Activated B cell treated with CpG ODN at 0.5 μM for 24 hours (primary cell): ENCODE measurements at regions of chr17 and their contacts with region 1.

Region 1: DNA sequence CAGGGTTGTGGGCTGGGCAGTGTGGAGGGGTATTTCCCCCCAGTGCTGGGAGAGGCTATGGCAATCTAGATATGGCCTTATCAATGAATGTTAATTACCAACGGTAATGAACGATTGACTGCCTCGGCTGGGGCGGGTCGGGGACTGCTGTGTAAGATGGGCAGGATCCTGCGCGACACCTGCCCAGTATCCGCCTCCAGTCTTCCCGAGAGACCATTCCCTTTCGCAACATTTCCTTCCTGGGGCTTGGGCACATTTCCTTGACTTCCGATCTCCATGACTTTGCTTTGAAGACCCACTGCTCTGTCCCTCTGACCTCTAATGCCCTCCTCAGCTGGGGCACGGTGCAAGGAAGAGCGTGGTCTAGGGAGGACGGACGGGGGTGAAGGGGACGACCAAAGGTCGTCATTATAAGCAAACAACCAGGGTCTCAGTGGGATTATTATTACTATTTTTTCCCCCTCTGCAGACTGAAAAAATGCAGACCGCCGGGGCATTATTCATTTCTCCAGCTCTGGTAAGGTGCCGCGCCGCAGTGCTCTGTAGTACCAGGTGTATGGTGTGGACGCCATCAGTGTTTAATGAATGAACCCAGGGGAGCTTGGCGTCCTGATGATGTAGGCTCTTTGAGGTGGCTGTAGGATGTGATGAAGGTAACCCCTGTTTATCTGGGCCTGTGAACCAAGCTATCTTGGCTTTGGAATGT is 506 bp downstream of the ATP5MC1 start:
- DNase-seq: no peak
- ATAC-seq: no peak
- H3K4me3 Mint-ChIP-seq: peak overlapping the region; percentile 94
- H3K27ac Mint-ChIP-seq: peak overlapping the region; percentile 94
- H3K4me1 Mint-ChIP-seq: peaks cover 34% of the 10 kb centered on the region
- H3K27me3 Mint-ChIP-seq: no peaks in the 10 kb centered on the region
- CTCF ChIP-seq: no peak

Region 2: GRCh38 chr17:48101012-48101720 is 791.9 kb before region 1 on chr17 and contains the start of gene CBX1:
- CTCF ChIA-PET with region 1: no interaction called
- POLR2A ChIA-PET with region 1: no interaction called
- intact Hi-C with region 1: loop called (anchors 5 kb)
- DNase-seq: peak; percentile 92
- ATAC-seq: peak; percentile 92
- H3K4me3 Mint-ChIP-seq: peak within 1 kb of the TSS; percentile 94
- H3K27ac Mint-ChIP-seq: peak within 1 kb of the TSS; percentile 92
- H3K4me1 Mint-ChIP-seq: peaks cover 50% of the 10 kb centered on the region
- H3K27me3 Mint-ChIP-seq: no peaks in the 10 kb centered on the region
- CTCF ChIP-seq: no peak
- total RNA-seq, gene CBX1: 46.0 and 49.5 TPM in 2 replicates

Region 3: DNA sequence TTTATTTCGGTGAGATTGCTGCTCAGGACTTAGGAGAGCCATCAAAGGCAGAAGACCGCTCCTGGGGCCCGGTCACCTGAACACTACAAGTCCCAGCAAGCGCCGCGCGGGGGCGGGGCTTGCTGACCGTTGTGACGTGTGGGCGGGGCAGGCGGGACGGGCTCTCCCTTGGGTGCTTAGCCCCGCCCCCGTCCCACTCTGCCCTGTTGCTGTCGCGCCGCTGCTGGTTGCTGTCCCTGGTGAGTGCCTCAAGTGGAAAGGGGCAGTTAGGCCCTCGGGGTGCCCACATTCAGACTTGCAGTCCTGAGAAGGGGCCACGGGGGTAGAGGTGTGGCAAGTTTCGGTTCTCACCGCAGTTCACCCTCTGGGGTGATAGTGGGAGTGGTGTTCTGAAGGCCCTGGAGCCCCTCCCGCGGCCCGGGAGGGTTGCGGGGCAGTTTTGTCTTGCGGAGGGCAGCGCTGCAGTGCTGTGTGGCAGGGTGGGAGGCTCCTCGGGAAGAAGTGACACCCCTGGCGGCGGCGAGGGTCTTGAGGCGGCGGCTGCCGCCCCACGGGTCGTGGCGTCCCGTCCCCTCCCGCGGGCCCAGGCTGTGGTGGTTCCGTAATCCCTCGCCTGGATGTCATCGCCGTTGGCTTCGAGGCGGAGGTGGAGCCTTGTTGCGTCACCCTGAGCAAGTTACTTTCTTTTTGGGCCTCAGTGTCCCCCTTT is 62.1 kb before region 1 on chr17 and contains the start of gene CALCOCO2:
- CTCF ChIA-PET with region 1: no interaction called
- POLR2A ChIA-PET with region 1: no interaction called
- intact Hi-C with region 1: loop called (anchors 1 kb)
- DNase-seq: peak; percentile 82
- ATAC-seq: peak; percentile 96
- H3K4me3 Mint-ChIP-seq: peak within 1 kb of the TSS; percentile 99
- H3K27ac Mint-ChIP-seq: peak within 1 kb of the TSS; percentile 99
- H3K4me1 Mint-ChIP-seq: peaks cover 42% of the 10 kb centered on the region
- H3K27me3 Mint-ChIP-seq: no peaks in the 10 kb centered on the region
- CTCF ChIP-seq: no peak
- total RNA-seq, gene CALCOCO2: 115 TPM in 2 replicates

Region 4: DNA sequence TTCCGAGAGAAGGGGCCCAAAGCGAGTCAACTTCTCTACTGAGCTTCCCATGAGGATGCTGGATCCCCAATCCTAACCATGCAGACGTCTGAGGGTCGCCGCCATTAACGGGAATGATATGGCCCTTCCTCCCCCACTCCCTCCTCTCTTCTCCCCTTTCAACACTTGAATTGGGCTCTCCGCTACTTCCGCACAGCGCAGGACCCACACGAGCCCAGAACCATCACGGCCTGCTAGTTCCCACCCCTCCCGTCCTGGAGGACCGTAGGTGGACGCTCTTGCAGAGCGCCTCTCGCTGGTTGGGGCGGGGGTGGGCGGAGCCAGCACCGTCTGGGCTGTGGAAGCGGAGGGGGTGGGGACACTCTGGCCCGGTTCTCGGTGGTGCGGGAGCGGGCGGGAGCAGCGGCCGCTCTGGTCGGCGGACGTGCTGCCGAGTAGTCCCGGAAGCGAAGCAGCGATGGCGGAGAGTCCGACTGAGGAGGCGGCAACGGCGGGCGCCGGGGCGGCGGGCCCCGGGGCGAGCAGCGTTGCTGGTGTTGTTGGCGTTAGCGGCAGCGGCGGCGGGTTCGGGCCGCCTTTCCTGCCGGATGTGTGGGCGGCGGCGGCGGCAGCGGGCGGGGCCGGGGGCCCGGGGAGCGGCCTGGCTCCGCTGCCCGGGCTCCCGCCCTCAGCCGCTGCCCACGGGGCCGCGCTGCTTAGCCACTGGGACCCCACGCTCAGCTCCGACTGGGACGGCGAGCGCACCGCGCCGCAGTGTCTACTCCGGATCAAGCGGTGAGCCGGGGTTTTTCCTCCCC is 15.2 kb after region 1 on chr17 and contains the start of gene UBE2Z:
- CTCF ChIA-PET with region 1: interaction called, 3 read pairs
- POLR2A ChIA-PET with region 1: interaction called, 103 read pairs
- intact Hi-C with region 1: loop called (anchors 1 kb)
- DNase-seq: peak; percentile 83
- ATAC-seq: peak; percentile 84
- H3K4me3 Mint-ChIP-seq: peak within 1 kb of the TSS; percentile 96
- H3K27ac Mint-ChIP-seq: peak within 1 kb of the TSS; percentile 99
- H3K4me1 Mint-ChIP-seq: peaks cover 51% of the 10 kb centered on the region
- H3K27me3 Mint-ChIP-seq: no peaks in the 10 kb centered on the region
- CTCF ChIP-seq: no peak
- total RNA-seq, gene UBE2Z: 121 and 154 TPM in 2 replicates

Region 5: DNA sequence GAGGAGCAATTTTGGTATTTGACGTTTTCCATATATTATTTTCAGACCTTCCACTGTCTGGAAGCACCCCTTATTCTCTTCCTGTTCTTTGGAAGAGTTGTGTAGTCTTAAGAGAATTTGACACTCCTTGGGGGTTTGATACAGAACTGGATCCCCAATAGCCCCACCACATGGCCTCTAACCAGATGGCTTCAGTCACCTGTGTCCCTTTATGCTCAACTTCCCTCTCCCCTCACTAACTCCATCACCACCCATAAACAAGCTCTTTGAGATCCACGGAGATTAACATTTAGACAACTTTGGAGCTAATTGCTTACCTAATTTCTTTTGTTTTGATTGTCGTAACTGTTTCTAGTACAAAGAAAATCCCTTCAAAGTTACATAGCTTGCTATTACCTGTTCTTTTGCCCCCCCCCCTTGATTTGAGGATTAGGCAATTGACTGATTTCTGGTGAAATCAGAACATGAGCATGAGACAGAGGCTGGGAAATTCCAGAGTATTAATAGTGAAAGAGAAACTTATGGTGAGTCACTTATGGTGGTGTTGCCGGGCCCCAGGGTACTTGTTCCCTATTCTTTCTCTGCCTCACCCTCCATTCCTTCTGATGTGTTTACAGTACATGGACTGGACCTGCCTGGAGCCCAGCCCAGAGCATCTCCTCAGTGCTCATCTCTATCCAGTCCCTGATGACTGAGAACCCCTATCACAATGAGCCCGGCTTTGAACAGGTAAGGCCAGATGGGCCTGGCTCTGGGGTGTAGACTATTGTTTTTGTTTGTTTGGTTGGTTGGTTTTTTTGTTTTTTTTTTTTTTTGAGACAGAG is 22.6 kb after region 1 on chr17:
- CTCF ChIA-PET with region 1: interaction called, 11 read pairs
- POLR2A ChIA-PET with region 1: interaction called, 61 read pairs
- intact Hi-C with region 1: no loop called
- DNase-seq: peak; percentile 35
- ATAC-seq: peak; percentile 90
- H3K4me3 Mint-ChIP-seq: peak overlapping the region; percentile 60
- H3K27ac Mint-ChIP-seq: peak overlapping the region; percentile 92
- H3K4me1 Mint-ChIP-seq: peaks cover 54% of the 10 kb centered on the region
- H3K27me3 Mint-ChIP-seq: no peaks in the 10 kb centered on the region
- CTCF ChIP-seq: no peak

Region 6: DNA sequence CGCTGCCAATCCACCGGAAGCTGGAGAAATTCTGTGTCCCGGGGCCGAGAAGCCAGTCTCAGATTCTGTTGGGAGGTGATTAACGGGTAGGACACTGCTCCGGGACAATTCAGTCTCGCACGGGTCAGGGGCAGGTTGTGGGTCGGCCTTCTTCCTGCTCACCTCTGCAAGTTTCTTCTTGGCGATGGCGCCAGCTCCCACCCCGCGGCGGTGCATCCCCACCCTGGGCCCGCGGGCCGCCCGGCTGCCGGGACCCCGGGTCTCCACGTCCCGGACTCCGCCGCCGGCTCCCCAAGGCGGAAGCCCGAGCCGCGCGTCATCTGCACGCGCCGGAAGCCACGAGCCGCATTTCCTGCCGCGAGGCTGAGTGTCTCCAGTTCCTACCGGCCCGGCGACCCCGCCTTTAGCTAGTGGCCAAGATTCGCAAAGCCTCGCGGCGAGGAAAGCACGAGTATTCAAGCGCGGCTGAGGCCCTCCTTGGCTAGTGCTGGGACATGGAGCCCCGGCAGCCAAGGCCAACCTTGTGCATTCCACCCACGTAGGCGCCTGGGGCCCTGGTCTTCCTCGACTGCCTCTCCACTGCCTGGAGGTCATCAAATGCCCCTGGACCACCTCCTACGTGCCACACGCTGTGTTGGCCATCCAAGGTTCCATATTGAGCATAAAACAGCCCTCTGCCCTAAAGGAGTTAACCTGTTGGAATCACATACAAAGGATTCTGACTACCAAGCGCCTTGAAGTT is 51.6 kb after region 1 on chr17 and contains the start of gene SNF8:
- CTCF ChIA-PET with region 1: no interaction called
- POLR2A ChIA-PET with region 1: interaction called, 42 read pairs
- intact Hi-C with region 1: loop called (anchors 1 kb)
- DNase-seq: peak; percentile 96
- ATAC-seq: peak; percentile 94
- H3K4me3 Mint-ChIP-seq: peak within 1 kb of the TSS; percentile 96
- H3K27ac Mint-ChIP-seq: peak within 1 kb of the TSS; percentile 90
- H3K4me1 Mint-ChIP-seq: peaks cover 16% of the 10 kb centered on the region
- H3K27me3 Mint-ChIP-seq: no peaks in the 10 kb centered on the region
- CTCF ChIP-seq: no peak
- total RNA-seq, gene SNF8: 129 and 130 TPM in 2 replicates

Region 7: GRCh38 chr17:49045376-49045775 is 152.3 kb after region 1 on chr17:
- CTCF ChIA-PET with region 1: no interaction called
- POLR2A ChIA-PET with region 1: no interaction called
- intact Hi-C with region 1: no loop called
- DNase-seq: no peak
- ATAC-seq: no peak
- H3K4me3 Mint-ChIP-seq: no peak overlapping the region
- H3K27ac Mint-ChIP-seq: no peak overlapping the region
- H3K4me1 Mint-ChIP-seq: no peaks in the 10 kb centered on the region
- H3K27me3 Mint-ChIP-seq: peaks cover 1% of the 10 kb centered on the region
- CTCF ChIP-seq: no peak